Left ventricle myocardium superior (tissue), 1 donor: ENCODE measurements at regions of chr6 and their contacts with region 1.

Region 1: GRCh38 chr6:122381497-122382265 is 17.8 kb upstream of the HSF2 start:
- DNase-seq: peak; percentile 36
- ATAC-seq: peak; percentile 78

Region 2: GRCh38 chr6:122008101-122008999 is 373.3 kb before region 1 on chr6:
- intact Hi-C with region 1: no loop called
- DNase-seq: peak; percentile 50
- ATAC-seq: peak; percentile 99

Region 3: GRCh38 chr6:122530440-122531046 is 148.9 kb after region 1 on chr6:
- intact Hi-C with region 1: loop called (anchors 2 kb)
- DNase-seq: no peak
- ATAC-seq: peak; percentile 74